ENCODE measurements at regions of chr11 and their contacts with region 1.

Region 1: DNA sequence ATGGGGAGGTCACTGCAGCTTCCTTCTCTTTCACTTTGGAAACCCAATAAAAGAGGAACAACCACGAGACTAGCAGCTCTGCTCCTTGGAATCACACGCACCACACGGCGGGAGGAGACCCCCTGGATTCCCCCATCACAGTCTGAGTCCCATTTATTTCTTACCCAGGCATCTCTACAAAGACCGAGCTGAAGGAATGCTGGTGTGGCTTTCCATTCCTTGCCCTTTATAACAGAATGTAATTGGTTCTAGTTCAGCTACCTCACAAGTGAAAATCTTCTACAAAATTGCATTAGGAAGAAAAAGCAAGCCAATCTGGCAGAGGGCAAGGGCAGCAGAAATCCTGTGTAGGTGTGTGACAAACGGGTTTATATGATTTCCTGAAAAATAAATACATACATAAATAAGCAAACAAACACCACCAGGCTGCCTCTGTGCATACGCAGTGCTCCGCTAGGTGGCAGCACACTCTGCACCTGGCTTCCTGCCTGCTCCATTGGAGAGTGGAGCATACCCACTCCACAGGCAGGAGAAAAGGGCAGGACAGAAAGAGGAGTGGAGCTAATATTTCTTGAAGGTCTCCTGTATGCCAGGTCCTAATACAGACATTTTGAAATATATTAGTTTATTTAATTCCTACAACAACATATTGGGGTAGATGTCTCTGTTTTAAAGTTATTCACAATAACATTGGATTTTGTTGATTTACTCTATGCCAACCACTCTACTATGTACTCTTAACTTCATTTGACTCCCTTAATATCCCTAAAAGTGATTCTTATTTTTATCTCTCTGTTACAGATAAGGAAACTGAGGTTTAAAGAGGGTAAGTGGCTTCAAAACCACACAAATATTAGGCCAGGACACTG is 673.1 kb downstream of the KCNA4 start:
- DNase-seq: peak in 1 of 2 experiments; percentile 70
- H3K4me3 ChIP-seq: no peak overlapping the region
- H3K27ac ChIP-seq: no peak overlapping the region
- H3K4me1 ChIP-seq: no peaks in the 10 kb centered on the region
- H3K27me3 ChIP-seq: no peaks in the 10 kb centered on the region
- CTCF ChIP-seq: peak; percentile 93

Region 2: DNA sequence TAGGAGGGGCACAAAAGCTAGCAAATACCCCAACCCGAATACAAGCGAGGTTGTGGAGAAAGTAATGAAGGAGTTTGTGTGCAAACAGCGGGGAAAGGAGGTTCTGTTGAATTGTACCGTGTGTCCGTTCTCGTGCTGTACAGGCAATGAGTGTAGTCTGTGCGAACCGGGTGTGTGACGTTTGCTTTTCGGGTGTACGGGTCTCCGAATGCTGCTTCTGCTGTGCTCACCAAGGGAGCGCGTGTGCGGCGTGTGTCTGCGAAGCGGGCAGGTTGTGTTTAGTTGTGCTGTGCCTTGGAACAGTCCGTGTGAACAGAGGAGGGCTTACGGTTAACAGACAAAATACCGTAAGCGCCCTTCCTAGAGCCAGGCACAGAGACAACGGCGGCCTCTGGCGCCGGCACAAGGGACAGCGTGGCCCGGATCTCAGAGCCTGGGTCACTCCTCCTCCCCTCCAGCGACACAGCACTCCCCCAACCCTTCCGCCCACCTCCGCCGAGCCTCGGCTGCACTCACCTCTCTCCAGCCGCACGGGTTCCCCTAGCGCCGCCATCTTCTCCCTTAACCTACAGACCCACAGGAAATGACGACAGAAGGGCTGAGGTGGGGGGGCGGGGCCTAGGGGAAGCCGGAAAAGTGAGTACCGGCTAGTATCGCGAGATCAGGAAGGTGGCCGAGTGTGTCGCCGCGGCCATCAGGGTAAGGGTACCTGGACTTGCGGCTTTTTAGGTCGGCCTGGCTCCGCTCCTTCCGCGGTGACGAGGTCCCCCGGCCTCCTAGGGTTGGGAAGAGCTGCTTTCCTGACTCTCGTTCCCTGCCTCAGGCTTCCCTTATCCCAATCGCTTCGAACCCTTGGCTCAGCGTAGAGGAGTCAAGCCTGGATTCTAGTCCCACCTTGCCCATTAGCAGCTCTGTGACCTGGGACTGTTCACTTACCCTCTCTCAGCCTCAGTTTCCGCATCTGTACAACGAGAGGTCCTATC is 1837.2 kb before region 1 on chr11 and contains the start of gene LIN7C:
- CTCF ChIA-PET with region 1: no interaction called
- POLR2A ChIA-PET with region 1: no interaction called
- intact Hi-C with region 1: loop called (anchors 10 kb)
- DNase-seq: peak; percentile 79 to 88
- H3K4me3 ChIP-seq: peak within 1 kb of the TSS; percentile 94
- H3K27ac ChIP-seq: peak within 1 kb of the TSS; percentile 67
- H3K4me1 ChIP-seq: peaks cover 8% of the 10 kb centered on the region
- H3K27me3 ChIP-seq: no peaks in the 10 kb centered on the region
- CTCF ChIP-seq: no peak
- total RNA-seq, gene LIN7C: 21.2 and 30.6 TPM in 2 replicates

Region 3: GRCh38 chr11:30143098-30143705 is 799.5 kb after region 1 on chr11:
- CTCF ChIA-PET with region 1: no interaction called
- POLR2A ChIA-PET with region 1: no interaction called
- intact Hi-C with region 1: loop called (anchors 5 kb)
- DNase-seq: peak in 1 of 2 experiments; percentile 1
- H3K4me3 ChIP-seq: no peak overlapping the region
- H3K27ac ChIP-seq: no peak overlapping the region
- H3K4me1 ChIP-seq: no peaks in the 10 kb centered on the region
- H3K27me3 ChIP-seq: no peaks in the 10 kb centered on the region
- CTCF ChIP-seq: peak; percentile 86

Region 4: GRCh38 chr11:30322826-30323710 is 979.4 kb after region 1 on chr11 and contains the start of gene ARL14EP:
- CTCF ChIA-PET with region 1: no interaction called
- POLR2A ChIA-PET with region 1: no interaction called
- intact Hi-C with region 1: loop called (anchors 5 kb)
- DNase-seq: peak; percentile 94 to 96
- H3K4me3 ChIP-seq: peak within 1 kb of the TSS; percentile 88
- H3K27ac ChIP-seq: peak within 1 kb of the TSS; percentile 62
- H3K4me1 ChIP-seq: peaks cover 18% of the 10 kb centered on the region
- H3K27me3 ChIP-seq: no peaks in the 10 kb centered on the region
- CTCF ChIP-seq: no peak
- total RNA-seq, gene ARL14EP: 14.8 and 16.2 TPM in 2 replicates

Region 5: DNA sequence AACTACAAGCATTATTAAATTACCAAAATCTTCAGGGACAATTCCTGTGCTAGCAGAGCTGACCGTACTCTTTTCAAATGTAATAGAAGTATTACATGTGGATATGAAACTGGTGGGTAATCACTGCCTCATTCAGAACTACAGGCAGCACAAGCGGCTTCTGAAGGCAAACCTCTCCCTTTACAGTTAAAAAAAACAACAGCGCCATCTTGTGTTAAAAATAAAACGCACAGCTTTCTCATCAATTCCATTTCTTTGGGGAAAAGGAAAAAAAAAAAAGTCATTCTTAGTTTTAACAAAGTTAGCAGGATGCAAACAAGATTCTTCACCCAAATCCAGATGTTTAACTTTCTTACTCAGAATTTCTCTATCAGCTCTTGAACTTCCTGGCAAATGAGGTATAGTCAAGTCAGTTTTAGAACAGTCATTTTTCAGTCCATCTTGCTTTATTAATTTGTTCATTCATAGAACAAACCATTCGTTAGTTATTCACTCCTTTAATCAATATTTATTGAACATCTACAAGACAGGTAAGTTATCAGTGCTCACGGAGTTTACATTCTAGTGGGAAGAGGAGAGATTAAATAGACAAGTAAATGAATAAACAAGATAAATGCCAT is 1574.3 kb after region 1 on chr11:
- CTCF ChIA-PET with region 1: no interaction called
- POLR2A ChIA-PET with region 1: no interaction called
- intact Hi-C with region 1: loop called (anchors 2 kb)
- DNase-seq: no peak
- H3K4me3 ChIP-seq: no peak overlapping the region
- H3K27ac ChIP-seq: no peak overlapping the region
- H3K4me1 ChIP-seq: no peaks in the 10 kb centered on the region
- H3K27me3 ChIP-seq: no peaks in the 10 kb centered on the region; the same call in 1 of the 2 replicates
- CTCF ChIP-seq: peak; percentile 87

Measured in PC-9 (cell line).